ENCODE measurements at regions of chr2 and their contacts with region 1.

Region 1: GRCh38 chr2:143705108-143705686 is 576.0 kb downstream of the ARHGAP15 start:
- DNase-seq: no peak
- ATAC-seq: no peak
- H3K4me3 ChIP-seq: no peak overlapping the region
- H3K27ac ChIP-seq: no peak overlapping the region
- H3K4me1 ChIP-seq: peaks cover 2 to 14% of the 10 kb centered on the region in 2 donors
- H3K27me3 ChIP-seq: no peaks in the 10 kb centered on the region

Region 2: GRCh38 chr2:143513081-143513480 is 192.1 kb before region 1 on chr2:
- intact Hi-C with region 1: loop called in 1 of 2 experiments (anchors 10 kb)
- DNase-seq: peak in 1 of 2 donors; percentile 47
- ATAC-seq: peak; percentile 85
- H3K4me3 ChIP-seq: no peak overlapping the region
- H3K27ac ChIP-seq: no peak overlapping the region
- H3K4me1 ChIP-seq: no peaks in the 10 kb centered on the region
- H3K27me3 ChIP-seq: no peaks in the 10 kb centered on the region

Region 3: GRCh38 chr2:143524119-143524553 is 181.1 kb before region 1 on chr2:
- intact Hi-C with region 1: loop called (anchors 5 to 10 kb)
- DNase-seq: no peak
- ATAC-seq: no peak
- H3K4me3 ChIP-seq: no peak overlapping the region
- H3K27ac ChIP-seq: no peak overlapping the region
- H3K4me1 ChIP-seq: no peaks in the 10 kb centered on the region
- H3K27me3 ChIP-seq: no peaks in the 10 kb centered on the region